ENCODE measurements at regions of chr1 and their contacts with region 1.

Region 1: DNA sequence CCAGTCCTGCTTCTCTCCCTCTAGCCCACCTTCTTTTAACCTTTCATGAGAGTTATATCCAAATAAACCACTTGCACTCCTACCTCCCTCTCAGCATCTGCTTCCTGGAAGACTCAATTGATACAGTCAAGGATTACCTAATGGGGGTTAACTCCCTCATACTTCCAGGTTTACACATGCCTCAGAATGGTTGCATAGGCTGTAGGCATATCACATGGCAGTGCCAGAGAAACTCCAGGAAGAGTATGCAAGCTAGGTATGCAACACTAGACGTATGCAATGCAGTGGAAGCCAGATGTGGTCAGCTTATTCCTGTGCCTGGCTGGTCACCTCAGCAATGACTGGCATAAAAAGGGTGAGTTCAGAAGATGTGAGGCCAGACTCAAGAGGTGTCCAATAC is 32.7 kb upstream of the VANGL1 start:
- DNase-seq: no peak
- ATAC-seq: no peak

Region 2: DNA sequence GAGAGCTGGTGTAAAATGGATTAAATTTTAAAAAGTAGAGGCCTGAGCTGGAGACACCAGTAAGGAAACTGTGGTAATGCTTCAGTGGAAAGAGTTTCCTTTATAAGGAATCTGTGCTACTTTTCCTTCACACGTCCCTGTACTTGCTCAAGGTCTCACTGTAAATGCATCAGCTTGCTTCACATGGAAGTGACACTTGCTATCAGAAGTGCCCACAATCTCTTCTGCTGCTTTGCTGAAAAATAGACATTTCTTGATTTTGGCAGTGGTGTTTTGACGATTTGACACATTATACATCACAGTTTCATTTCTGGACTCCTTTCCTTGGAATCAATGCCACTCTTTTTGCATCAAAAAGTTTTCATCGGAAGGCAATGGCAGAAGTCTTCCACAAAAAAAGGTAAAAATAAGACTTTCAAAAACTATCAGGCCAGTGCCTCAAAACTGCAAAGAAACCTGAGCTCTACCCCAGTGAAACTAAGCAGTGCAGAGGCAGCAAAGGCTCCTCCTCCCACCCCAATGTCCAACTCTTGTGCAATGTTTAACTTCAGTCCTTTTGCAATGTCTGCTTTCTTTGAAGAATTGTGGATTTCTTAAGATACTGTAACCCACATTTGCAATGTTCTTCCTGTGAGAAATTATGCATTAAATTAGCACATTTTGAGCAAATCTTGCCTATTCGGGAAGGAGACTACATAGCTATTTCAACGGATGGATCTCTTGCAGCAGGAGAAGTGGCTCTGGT is 501.3 kb before region 1 on chr1:
- intact Hi-C with region 1: no loop called
- DNase-seq: no peak
- ATAC-seq: no peak

Region 3: GRCh38 chr1:115577513-115577912 is 31.5 kb before region 1 on chr1:
- intact Hi-C with region 1: no loop called
- DNase-seq: no peak
- ATAC-seq: no peak

Region 4: GRCh38 chr1:115706587-115707425 is 97.8 kb after region 1 on chr1:
- intact Hi-C with region 1: loop called in 1 of 2 experiments (anchors 5 kb)
- DNase-seq: no peak
- ATAC-seq: peak; percentile 52

Region 5: GRCh38 chr1:115771847-115772457 is 162.9 kb after region 1 on chr1:
- intact Hi-C with region 1: loop called (anchors 5 to 10 kb)
- DNase-seq: peak; percentile 41 to 53
- ATAC-seq: peak; percentile 93